Naive thymus-derived CD4-positive, alpha-beta T cell (primary cell): ENCODE measurements at regions of chr6 and their contacts with region 1.

Region 1: GRCh38 chr6:137975188-137975940 is 108.3 kb downstream of the TNFAIP3 start:
- DNase-seq: peak in 7 of 9 donors; percentile 22 to 65 (median 51)
- ATAC-seq: peak; percentile 85
- H3K4me3 ChIP-seq: peak overlapping the region; percentile 5
- H3K4me3 Mint-ChIP-seq: peak overlapping the region; percentile 9 to 92 (median 78)
- H3K27ac ChIP-seq: peak overlapping the region; percentile 66
- H3K27ac Mint-ChIP-seq: peak overlapping the region; percentile 91 to 99 (median 94)
- H3K4me1 ChIP-seq: peaks cover 17 to 41% of the 10 kb centered on the region in 2 donors
- H3K4me1 Mint-ChIP-seq: peaks cover 23 to 55% (median 31%) of the 10 kb centered on the region in 7 donors
- H3K27me3 ChIP-seq: no peaks in the 10 kb centered on the region
- H3K27me3 Mint-ChIP-seq: no peaks in the 10 kb centered on the region

Region 2: DNA sequence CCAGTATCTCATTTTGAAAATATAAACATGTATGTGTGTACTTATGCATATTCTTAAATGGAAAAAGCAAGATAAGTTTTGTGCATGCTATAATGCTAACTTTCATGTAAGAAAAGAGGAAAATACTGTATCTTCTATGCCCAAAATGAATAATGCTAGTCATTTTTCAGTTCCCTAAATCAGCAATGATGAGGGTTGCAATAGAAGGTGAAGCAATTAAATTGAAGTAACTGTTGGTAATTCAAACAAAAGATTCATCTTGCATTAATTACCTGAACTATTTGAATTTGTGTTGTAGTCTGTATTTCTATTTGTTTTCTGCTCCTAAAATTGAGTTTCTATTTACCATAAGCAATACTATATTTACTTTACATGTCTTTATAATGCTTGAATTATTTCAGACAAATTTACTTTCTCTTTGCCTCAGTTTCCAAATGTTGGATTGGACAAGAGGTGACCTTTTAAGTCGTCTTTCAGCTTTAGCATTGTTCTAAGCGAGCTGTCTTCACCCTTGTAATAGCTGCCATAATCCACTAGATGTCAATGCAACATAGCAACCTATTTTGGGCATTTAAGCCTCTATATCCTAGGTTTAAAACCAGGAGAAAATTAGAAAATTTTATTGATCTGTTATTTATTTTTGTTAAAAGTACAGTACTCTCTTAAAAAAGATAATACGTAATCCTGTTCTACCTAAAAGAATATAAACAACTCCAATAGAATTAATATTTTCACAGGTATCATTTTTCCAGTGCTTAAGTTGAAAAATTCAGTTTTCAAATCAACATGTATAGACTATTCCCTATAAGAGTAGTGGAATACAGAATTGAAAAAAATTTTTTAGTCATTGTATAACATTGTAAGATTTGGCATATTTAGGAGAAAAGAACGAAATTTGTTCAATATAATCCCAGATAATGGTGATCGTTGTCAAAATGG is 703.9 kb before region 1 on chr6:
- CTCF ChIA-PET with region 1: no interaction called
- POLR2A ChIA-PET with region 1: no interaction called
- intact Hi-C with region 1: loop called in 1 of 2 experiments (anchors 2 kb)
- DNase-seq: peak in 5 of 9 donors; percentile 8 to 41 (median 27)
- ATAC-seq: peak; percentile 76
- H3K4me3 ChIP-seq: no peak overlapping the region
- H3K4me3 Mint-ChIP-seq: no peak overlapping the region
- H3K27ac ChIP-seq: no peak overlapping the region
- H3K27ac Mint-ChIP-seq: no peak overlapping the region
- H3K4me1 ChIP-seq: peaks cover 0 to 16% of the 10 kb centered on the region in 2 donors
- H3K4me1 Mint-ChIP-seq: peaks cover 0 to 7% (median 0%) of the 10 kb centered on the region in 7 donors
- H3K27me3 ChIP-seq: no peaks in the 10 kb centered on the region
- H3K27me3 Mint-ChIP-seq: peaks cover 5 to 38% (median 6%) of the 10 kb centered on the region in 5 donors

Region 3: DNA sequence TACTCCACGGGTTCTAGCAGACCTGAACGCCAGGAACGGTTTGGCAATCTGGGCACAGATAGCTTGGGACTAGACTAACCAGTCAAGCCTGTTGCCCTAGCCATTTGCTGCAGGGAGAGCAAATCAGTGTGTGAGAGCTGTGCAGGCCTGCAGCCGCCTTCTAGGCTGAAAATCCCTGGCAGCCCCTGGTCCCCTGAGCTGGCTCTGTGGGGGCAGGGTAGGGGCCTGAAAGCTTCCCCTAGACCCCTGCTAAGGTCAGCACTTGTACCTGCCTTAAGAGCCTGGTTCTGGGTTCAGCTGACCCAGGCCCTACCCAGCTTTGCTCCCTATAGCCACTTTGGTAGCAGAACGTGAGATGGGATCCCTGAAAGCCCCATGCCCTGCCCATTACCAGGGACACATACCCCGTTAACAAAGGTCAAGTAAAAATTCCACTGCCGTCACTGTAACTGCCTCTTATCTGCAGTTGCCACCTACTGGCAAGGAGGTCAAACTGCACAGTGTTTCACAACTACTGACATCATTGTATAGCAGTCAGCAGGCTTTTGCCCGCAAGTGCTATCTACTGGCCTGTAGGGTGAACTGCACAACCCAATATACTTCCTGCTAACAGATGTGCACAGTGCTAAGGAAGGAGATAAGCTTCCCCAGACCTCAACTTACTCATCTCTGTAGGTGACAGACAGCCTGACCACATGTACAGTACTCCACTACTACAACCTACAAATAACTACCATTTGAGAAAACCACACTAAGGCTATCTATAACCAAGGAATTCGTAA is 386.1 kb before region 1 on chr6:
- CTCF ChIA-PET with region 1: no interaction called
- POLR2A ChIA-PET with region 1: no interaction called
- intact Hi-C with region 1: loop called in 1 of 2 experiments (anchors 1 kb)
- DNase-seq: peak in 7 of 9 donors; percentile 33 to 73 (median 60)
- ATAC-seq: peak; percentile 99
- H3K4me3 ChIP-seq: no peak overlapping the region
- H3K4me3 Mint-ChIP-seq: peak overlapping the region in 6 of 10 donors; percentile 5 to 52 (median 19)
- H3K27ac ChIP-seq: no peak overlapping the region
- H3K27ac Mint-ChIP-seq: peak overlapping the region in 2 of 9 donors; percentile 13 to 39
- H3K4me1 ChIP-seq: peaks cover 0 to 6% of the 10 kb centered on the region in 2 donors
- H3K4me1 Mint-ChIP-seq: peaks cover 5 to 19% (median 9%) of the 10 kb centered on the region in 7 donors
- H3K27me3 ChIP-seq: no peaks in the 10 kb centered on the region
- H3K27me3 Mint-ChIP-seq: peaks cover 4 to 59% (median 5%) of the 10 kb centered on the region in 5 donors

Region 4: GRCh38 chr6:137799950-137800568 is 175.3 kb before region 1 on chr6:
- CTCF ChIA-PET with region 1: interaction called, 13 read pairs
- POLR2A ChIA-PET with region 1: interaction called, 6 read pairs
- intact Hi-C with region 1: loop called (anchors 1 to 10 kb)
- DNase-seq: peak in 7 of 9 donors; percentile 75 to 87 (median 81)
- ATAC-seq: peak; percentile 91
- H3K4me3 ChIP-seq: no peak overlapping the region
- H3K4me3 Mint-ChIP-seq: peak overlapping the region in 9 of 10 donors; percentile 0 to 71 (median 49)
- H3K27ac ChIP-seq: peak overlapping the region; percentile 50
- H3K27ac Mint-ChIP-seq: peak overlapping the region; percentile 70 to 97 (median 89)
- H3K4me1 ChIP-seq: peaks cover 15 to 47% of the 10 kb centered on the region in 2 donors
- H3K4me1 Mint-ChIP-seq: peaks cover 27 to 72% (median 64%) of the 10 kb centered on the region in 7 donors
- H3K27me3 ChIP-seq: no peaks in the 10 kb centered on the region
- H3K27me3 Mint-ChIP-seq: no peaks in the 10 kb centered on the region

Region 5: DNA sequence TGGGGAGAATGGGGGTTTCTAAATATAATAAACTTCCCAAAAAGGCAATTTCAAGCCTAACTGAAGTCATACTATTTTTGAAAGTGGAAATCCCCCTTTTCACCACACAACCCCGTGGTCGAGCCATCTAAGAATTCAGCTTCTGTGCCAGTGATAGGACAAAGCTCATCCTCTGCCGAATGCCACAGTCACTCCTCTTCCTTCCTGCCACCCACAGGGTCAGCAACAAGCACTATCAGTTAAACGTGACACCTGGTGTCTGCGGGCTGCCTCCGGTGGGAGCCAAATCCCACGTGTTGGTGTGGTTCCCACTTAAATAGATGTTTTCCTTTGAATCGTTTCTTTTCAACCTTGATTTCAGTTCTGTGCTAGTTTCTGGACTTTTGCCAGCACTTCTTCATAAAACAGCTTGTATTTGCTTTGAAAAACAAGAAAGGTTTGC is 47.6 kb before region 1 on chr6:
- CTCF ChIA-PET with region 1: no interaction called
- POLR2A ChIA-PET with region 1: no interaction called
- intact Hi-C with region 1: loop called in 1 of 2 experiments (anchors 1 kb)
- DNase-seq: peak; percentile 34 to 81 (median 74)
- ATAC-seq: peak; percentile 100
- H3K4me3 ChIP-seq: no peak overlapping the region
- H3K4me3 Mint-ChIP-seq: peak overlapping the region in 9 of 10 donors; percentile 60 to 87 (median 76)
- H3K27ac ChIP-seq: peak overlapping the region; percentile 46
- H3K27ac Mint-ChIP-seq: peak overlapping the region; percentile 15 to 93 (median 86)
- H3K4me1 ChIP-seq: peaks cover 19 to 25% of the 10 kb centered on the region in 2 donors
- H3K4me1 Mint-ChIP-seq: peaks cover 26 to 55% (median 41%) of the 10 kb centered on the region in 7 donors
- H3K27me3 ChIP-seq: no peaks in the 10 kb centered on the region
- H3K27me3 Mint-ChIP-seq: no peaks in the 10 kb centered on the region

Region 6: DNA sequence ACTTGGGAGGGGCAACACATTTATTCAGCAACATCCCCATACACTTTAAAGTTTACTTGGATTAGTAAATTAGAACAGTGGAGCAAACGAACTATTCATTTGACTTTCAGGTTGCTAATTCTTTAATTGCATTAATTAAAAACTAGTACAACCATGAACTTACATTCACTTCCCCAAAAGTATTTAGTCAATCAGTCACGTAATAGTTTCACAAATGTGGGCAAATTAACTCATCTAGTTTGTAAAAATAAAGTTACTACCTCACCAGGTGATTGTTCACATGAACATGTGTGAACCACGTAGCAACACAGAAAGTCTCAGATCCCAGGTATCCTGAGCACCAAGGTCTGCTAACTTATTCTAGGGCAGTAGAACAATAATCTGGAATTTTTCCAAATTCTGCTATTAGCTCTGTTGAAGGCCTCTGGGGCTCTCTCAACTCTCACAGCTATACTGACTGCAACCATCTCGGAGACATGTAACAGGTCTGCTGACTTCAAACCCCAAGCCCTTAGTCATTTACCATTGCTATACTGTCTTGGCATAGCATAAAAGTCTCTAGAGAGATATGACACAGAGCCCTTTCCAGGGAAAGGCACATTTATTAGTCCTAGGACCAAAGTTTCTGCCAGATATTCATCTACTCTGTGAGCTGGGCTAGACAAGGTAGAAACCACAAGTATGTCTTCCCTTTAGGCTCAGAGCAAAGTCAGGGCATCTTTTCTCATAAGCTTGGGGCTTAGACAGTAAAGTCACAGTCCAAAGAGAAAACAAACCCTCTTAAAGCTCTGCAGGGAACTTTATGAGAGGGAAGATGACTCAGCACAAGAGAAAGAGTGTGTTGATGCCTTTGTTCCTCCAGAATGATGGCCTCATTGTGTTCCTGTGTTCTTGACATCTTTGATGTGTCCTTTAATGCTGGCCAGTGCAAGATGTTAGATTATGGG is 747.3 kb after region 1 on chr6:
- CTCF ChIA-PET with region 1: no interaction called
- POLR2A ChIA-PET with region 1: no interaction called
- intact Hi-C with region 1: no loop called
- DNase-seq: no peak
- ATAC-seq: no peak
- H3K4me3 ChIP-seq: no peak overlapping the region
- H3K4me3 Mint-ChIP-seq: no peak overlapping the region
- H3K27ac ChIP-seq: no peak overlapping the region
- H3K27ac Mint-ChIP-seq: no peak overlapping the region
- H3K4me1 ChIP-seq: no peaks in the 10 kb centered on the region
- H3K4me1 Mint-ChIP-seq: no peaks in the 10 kb centered on the region
- H3K27me3 ChIP-seq: no peaks in the 10 kb centered on the region
- H3K27me3 Mint-ChIP-seq: peaks cover 0 to 10% (median 5%) of the 10 kb centered on the region in 5 donors